ENCODE measurements at regions of chr9 and their contacts with region 1.

Region 1: DNA sequence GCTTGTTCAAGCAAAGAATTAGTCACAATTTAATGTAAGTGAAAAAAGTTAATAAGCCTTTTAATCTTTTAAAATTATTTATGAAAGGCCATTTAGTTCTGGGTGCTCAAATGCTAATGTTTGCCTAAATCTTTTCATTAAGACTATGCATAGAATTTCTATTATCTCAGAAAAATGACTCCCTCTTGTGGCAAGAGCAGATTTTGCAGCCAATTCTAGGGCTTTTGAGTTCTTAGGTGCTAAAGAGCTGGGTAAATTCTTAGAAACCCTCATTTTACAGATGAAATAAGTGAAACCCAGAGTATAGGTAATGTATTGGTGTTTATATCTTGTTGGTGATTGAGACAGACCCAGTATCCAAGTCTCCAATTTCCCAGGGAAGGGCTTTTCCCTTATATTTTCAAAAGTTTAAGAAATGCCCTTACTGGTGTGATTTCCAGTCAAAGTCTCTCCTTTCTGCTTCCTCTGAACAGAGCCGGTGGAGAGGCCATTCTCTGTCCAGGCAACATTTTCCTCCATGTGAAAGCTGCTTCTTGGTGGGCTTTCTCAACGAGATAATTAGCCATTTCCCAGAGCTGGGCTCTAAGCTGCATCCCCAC is 24.1 kb upstream of the PCSK5 start:
- DNase-seq: peak in 3 of 5 donors; percentile 17 to 75 (median 39)
- H3K4me3 ChIP-seq: no peak overlapping the region
- H3K27ac ChIP-seq: no peak overlapping the region
- H3K4me1 ChIP-seq: no peaks in the 10 kb centered on the region
- H3K27me3 ChIP-seq: no peaks in the 10 kb centered on the region
- CTCF ChIP-seq: peak; percentile 46 to 72 (median 56)
- EP300 ChIP-seq: no peak
- POLR2A ChIP-seq: no peak

Region 2: DNA sequence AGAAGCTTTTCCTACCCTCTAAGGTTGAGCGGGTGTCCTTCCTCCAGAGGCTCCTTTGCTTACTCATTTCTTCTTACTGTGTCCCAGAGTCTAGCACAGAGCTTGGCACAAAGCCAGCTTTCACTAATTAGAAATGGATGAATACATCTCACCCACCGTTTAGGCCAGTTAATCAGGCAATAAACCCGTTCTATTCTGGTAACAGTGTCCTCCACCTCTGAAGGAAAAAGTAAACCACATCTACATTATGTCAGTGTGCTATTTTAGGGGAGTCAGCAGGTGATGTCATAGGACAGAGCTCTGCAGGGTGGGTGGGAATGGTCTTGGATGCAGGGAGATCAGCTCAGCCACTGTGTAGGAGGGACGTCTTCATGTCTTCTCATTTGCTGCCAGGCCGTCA is 668.8 kb before region 1 on chr9:
- intact Hi-C with region 1: loop called in 1 of 4 experiments (anchors 10 kb)
- DNase-seq: no peak
- H3K4me3 ChIP-seq: no peak overlapping the region
- H3K27ac ChIP-seq: no peak overlapping the region
- H3K4me1 ChIP-seq: no peaks in the 10 kb centered on the region
- H3K27me3 ChIP-seq: no peaks in the 10 kb centered on the region
- CTCF ChIP-seq: no peak
- EP300 ChIP-seq: no peak
- POLR2A ChIP-seq: no peak

Region 3: DNA sequence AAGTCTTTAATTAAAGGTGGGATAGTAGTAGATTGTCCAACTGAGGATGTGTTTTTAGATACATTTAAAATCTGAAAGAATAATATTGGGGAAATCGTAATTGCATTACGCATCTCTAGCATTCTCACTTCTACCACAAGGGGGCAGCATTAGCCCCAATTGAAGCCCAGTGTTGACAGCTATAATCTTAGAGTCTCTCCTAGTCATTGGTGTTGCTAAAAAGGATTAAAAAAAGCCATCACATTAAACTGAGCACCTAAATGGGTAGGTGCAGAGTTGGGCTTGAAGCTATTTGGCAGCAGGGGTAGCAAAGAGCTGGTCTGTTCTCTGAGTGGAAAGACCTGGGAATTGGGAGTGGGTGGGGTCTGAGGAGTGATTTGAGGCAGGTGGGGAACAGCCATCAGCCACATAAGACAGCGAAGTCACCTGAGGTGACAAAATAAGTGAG is 600.8 kb before region 1 on chr9:
- intact Hi-C with region 1: loop called in 1 of 4 experiments (anchors 10 kb)
- DNase-seq: peak in 4 of 5 donors; percentile 22 to 60 (median 28)
- H3K4me3 ChIP-seq: no peak overlapping the region
- H3K27ac ChIP-seq: no peak overlapping the region
- H3K4me1 ChIP-seq: no peaks in the 10 kb centered on the region
- H3K27me3 ChIP-seq: no peaks in the 10 kb centered on the region
- CTCF ChIP-seq: peak; percentile 80 to 82 (median 81)
- EP300 ChIP-seq: no peak
- POLR2A ChIP-seq: no peak

Region 4: GRCh38 chr9:75333624-75334023 is 532.7 kb before region 1 on chr9:
- intact Hi-C with region 1: loop called in 1 of 4 experiments (anchors 10 kb)
- DNase-seq: no peak
- H3K4me3 ChIP-seq: no peak overlapping the region
- H3K27ac ChIP-seq: no peak overlapping the region
- H3K4me1 ChIP-seq: no peaks in the 10 kb centered on the region
- H3K27me3 ChIP-seq: no peaks in the 10 kb centered on the region
- CTCF ChIP-seq: peak in 2 of 3 donors; percentile 58 to 61
- EP300 ChIP-seq: no peak
- POLR2A ChIP-seq: no peak

Region 5: GRCh38 chr9:76302947-76303940 is 436.9 kb after region 1 on chr9:
- intact Hi-C with region 1: loop called in 1 of 4 experiments (anchors 5 kb)
- DNase-seq: peak in 2 of 5 donors; percentile 13 to 33
- H3K4me3 ChIP-seq: no peak overlapping the region
- H3K27ac ChIP-seq: no peak overlapping the region
- H3K4me1 ChIP-seq: peaks cover 4% of the 10 kb centered on the region
- H3K27me3 ChIP-seq: no peaks in the 10 kb centered on the region
- CTCF ChIP-seq: peak; percentile 63 to 82 (median 81)
- EP300 ChIP-seq: no peak
- POLR2A ChIP-seq: no peak